Aorta (tissue), 5 donors: ENCODE measurements at regions of chr18 and their contacts with region 1.

Region 1: DNA sequence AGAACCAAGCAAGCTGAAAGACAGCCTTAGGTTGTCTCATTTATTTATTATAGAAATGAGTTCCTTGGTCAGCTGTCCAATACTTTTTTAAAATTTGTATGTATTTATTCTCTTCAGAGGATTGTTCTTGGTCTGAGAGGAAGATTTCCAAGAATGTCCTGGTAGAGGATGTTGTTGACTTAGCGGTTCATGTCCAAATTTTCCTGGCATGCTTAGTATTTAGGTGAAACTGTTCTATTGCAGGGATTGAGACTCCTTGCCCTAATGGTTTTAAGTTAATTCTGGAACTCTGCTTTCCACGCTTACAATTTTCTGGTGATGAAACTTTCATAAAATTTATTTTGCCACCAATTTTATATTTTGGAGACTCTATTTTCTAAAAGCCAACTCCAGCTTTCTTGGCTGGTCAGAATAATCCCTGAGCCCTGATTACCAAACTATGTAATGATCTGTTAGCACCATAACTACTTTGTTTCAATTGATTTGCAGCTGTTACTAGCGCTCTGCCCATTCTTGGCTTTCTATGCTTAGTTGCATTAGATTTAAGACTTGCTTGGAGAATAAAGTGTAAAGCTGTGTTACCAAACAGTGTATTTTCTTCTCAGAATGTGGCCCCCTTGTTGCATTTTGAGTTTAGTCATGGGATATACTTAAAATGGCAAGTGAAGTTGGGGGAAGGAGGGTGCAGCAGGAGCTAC is 1868.8 kb upstream of the CELF4 start:
- DNase-seq: no peak
- ATAC-seq: peak; percentile 68
- H3K4me3 ChIP-seq: no peak overlapping the region
- H3K27ac ChIP-seq: no peak overlapping the region
- H3K4me1 ChIP-seq: no peaks in the 10 kb centered on the region
- H3K27me3 ChIP-seq: no peaks in the 10 kb centered on the region

Region 2: DNA sequence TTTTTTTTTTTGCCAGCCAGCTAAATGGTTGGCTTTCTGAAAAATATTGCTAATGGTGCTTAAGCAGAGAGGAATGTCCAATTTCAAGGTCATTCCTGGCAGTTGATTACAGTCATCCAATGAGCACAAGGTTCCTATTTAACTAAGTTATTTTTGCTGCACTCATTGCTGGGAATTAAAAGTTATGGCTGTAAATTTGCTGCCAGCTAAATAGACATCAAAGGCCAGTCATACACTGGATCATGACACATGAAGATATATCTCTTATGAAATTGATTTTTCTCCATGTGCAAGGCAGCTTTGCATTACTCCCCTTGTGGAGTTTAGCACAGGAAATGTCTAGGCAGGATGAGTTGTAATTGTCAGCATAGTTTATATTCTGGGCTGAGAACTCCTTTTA is 29.6 kb after region 1 on chr18:
- intact Hi-C with region 1: loop called in 1 of 2 experiments (anchors 2 kb)
- DNase-seq: no peak
- ATAC-seq: no peak
- H3K4me3 ChIP-seq: no peak overlapping the region
- H3K27ac ChIP-seq: no peak overlapping the region
- H3K4me1 ChIP-seq: no peaks in the 10 kb centered on the region
- H3K27me3 ChIP-seq: no peaks in the 10 kb centered on the region